AG04450 (cell line): ENCODE measurements at regions of chr10 and their contacts with region 1.

Region 1: DNA sequence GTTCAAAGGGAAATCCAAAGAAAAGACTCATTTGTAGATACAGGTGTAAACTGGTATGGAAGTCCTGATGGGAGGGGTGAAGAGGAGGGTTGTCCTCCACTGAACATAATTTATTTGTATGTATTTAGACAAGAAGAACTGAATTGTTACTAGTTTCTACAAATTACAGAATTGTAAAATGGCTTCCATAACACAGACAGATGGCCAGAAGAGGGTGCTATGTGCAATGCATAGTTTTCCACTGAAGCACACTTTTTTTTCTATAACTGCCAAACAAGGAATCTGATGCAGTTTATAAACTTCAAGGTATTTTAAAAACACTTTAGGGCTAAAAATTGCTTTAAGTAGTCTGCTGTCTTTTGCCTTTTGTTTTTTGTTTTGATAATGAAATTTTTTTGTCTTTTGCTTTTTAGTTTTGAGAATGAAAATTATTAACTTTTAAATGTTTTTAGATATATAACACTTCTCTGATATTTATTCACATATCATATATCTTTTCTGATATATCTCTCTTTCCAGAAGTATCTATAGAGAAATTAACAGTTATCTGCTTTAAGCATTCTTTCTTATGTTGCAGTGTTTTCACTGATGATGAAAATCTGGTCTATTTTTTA is 58.5 kb downstream of the PHYHIPL start:
- DNase-seq: peak; percentile 15
- H3K4me3 ChIP-seq: no peak overlapping the region
- H3K27ac ChIP-seq: no peak overlapping the region
- H3K27me3 ChIP-seq: no peaks in the 10 kb centered on the region
- CTCF ChIP-seq: peak; percentile 75

Region 2: DNA sequence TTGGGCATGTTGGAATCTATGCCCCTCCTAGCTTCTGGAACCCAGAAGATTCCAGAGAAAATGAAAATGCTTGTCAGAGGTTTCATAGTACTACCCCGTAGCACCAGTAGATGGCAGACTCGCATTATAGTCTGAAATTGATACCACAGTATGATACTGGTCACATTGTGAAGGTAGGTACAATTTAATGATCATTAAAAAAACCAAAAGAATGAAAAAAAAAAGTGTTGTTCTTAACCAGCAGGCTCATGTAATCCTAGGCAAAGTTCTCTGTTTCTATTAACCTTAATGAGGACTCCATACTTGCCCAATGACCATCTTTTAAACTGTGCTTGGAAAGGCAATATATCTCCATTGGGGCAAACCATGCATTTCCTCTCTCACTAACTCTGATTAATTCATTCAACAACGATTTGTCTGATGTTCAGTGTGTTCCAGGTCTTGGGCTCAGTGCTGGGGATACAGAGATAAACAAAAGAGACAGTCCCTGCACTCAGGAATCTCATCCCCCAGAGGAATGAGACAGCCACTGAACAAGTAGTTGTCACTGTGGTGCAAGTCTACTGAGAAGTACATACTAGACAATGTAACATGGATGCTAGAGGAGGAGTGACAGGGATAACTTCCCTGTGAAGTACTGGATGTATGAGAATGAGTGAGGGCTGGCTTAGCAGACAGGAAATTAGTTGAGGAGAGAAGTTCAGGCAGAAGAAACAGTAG is 282.0 kb before region 1 on chr10:
- CTCF ChIA-PET with region 1: interaction called, 11 read pairs
- POLR2A ChIA-PET with region 1: no interaction called
- DNase-seq: no peak
- H3K4me3 ChIP-seq: no peak overlapping the region
- H3K27ac ChIP-seq: no peak overlapping the region
- H3K27me3 ChIP-seq: peaks cover 3% of the 10 kb centered on the region
- CTCF ChIP-seq: peak; percentile 81

Region 3: DNA sequence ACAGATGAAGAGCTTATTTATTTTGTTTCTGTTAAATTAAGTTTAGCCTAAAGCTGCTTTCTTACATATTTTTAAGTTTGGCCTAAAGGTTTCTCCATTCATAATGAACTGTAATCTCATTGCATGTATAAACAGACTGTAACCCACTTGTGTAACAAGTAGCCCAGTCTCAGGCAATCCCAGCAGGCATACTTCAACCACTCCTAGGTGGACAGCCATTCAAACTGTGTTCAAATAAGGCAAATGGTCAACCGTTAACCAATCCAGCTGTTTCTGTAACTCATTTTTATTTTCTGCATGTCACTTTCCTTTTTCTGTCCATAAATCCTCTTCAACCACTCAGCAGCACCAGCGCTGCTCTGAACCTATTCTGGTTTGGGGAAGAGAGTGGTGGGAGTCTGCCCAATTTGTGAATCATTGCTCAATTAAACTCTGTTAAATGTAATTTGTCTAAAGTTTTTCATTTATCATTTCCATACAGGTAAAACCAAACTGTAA is 22.6 kb before region 1 on chr10:
- CTCF ChIA-PET with region 1: no interaction called
- POLR2A ChIA-PET with region 1: no interaction called
- DNase-seq: no peak
- H3K4me3 ChIP-seq: no peak overlapping the region
- H3K27ac ChIP-seq: no peak overlapping the region
- H3K27me3 ChIP-seq: no peaks in the 10 kb centered on the region
- CTCF ChIP-seq: no peak

Region 4: DNA sequence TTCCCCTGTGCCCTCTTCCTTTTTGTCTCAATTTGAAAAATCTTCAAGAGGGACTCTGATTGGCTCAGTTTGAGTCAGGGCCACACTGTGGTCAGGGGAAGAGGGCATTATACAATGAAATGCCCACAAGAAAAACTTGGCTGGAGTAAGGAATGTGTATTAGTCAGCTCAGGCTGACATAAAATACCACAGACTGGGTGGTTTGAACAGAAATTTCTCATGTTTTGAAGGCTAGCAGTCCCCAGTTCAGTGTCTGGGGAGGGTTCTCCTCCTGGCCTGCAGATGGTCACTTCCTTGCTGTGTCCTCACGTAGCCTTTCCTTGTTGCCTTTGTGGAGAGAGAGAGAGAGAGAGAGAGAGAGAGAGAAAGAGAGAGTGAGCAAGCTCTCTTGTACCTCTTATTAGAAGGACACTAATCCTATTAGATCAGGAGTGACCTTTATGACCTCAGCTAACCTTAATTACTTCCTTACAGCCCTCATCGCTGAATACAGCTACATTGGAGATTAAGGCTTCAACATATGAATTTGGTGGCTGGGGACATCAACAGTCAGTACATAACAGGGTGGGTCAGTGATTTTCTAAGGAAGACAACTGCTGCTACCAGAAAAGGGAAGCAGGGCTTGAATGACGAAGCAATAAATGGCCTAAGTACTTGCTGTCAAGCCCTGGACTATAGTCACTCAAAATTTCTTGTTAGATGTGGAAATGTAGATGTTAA is 153.2 kb after region 1 on chr10:
- CTCF ChIA-PET with region 1: interaction called, 10 read pairs
- POLR2A ChIA-PET with region 1: no interaction called
- DNase-seq: peak; percentile 67
- H3K4me3 ChIP-seq: no peak overlapping the region
- H3K27ac ChIP-seq: peak overlapping the region; percentile 69
- H3K27me3 ChIP-seq: no peaks in the 10 kb centered on the region
- CTCF ChIP-seq: no peak

Region 5: GRCh38 chr10:59580026-59580863 is 345.3 kb after region 1 on chr10:
- CTCF ChIA-PET with region 1: interaction called, 41 read pairs
- POLR2A ChIA-PET with region 1: no interaction called
- DNase-seq: peak; percentile 29
- H3K4me3 ChIP-seq: no peak overlapping the region
- H3K27ac ChIP-seq: no peak overlapping the region
- H3K27me3 ChIP-seq: no peaks in the 10 kb centered on the region
- CTCF ChIP-seq: peak; percentile 65